ENCODE measurements at regions of chr12 and their contacts with region 1.

Region 1: GRCh38 chr12:121697098-121697698 is 15.4 kb upstream of the TMEM120B start:
- DNase-seq: no peak
- ATAC-seq: peak; percentile 14 to 51
- H3K4me3 ChIP-seq: peak overlapping the region in 1 of 4 donors; percentile 4
- H3K27ac ChIP-seq: peak overlapping the region in 1 of 4 donors; percentile 1
- H3K4me1 ChIP-seq: peaks cover 8 to 14% of the 10 kb centered on the region in 2 donors
- H3K27me3 ChIP-seq: no peaks in the 10 kb centered on the region
- CTCF ChIP-seq: peak; percentile 65 to 76 (median 70)
- POLR2A ChIP-seq: no peak

Region 2: DNA sequence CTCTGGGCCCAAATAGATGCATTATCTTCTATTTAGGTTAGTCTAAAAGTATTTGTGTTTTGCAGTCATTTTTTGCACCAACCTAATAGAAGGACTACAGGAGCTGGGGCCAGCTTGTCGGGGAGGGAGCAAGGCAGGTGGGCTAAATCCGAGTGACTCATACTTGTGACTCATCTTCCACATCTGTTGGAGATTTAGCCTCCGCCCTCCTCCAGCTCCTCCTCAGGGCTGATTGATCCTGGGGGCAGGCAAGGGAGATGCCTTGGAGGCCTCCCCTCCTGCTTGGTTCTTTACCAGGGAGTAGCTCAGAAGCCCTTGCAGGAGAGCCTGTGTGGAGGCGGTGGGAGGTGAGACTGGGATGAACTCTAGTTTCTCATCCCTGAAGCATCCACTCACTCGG is 68.4 kb after region 1 on chr12:
- in situ Hi-C with region 1: loop called (anchors 5 to 10 kb)
- intact Hi-C with region 1: no loop called
- DNase-seq: no peak
- ATAC-seq: no peak
- H3K4me3 ChIP-seq: no peak overlapping the region
- H3K27ac ChIP-seq: no peak overlapping the region
- H3K4me1 ChIP-seq: peaks cover 23 to 29% of the 10 kb centered on the region in 2 donors
- H3K27me3 ChIP-seq: no peaks in the 10 kb centered on the region
- CTCF ChIP-seq: no peak
- POLR2A ChIP-seq: no peak

Measured in gastrocnemius medialis (tissue), 4 donors.